Pancreas (tissue), 10 donors: ENCODE measurements at regions of chr2 and their contacts with region 1.

Region 1: DNA sequence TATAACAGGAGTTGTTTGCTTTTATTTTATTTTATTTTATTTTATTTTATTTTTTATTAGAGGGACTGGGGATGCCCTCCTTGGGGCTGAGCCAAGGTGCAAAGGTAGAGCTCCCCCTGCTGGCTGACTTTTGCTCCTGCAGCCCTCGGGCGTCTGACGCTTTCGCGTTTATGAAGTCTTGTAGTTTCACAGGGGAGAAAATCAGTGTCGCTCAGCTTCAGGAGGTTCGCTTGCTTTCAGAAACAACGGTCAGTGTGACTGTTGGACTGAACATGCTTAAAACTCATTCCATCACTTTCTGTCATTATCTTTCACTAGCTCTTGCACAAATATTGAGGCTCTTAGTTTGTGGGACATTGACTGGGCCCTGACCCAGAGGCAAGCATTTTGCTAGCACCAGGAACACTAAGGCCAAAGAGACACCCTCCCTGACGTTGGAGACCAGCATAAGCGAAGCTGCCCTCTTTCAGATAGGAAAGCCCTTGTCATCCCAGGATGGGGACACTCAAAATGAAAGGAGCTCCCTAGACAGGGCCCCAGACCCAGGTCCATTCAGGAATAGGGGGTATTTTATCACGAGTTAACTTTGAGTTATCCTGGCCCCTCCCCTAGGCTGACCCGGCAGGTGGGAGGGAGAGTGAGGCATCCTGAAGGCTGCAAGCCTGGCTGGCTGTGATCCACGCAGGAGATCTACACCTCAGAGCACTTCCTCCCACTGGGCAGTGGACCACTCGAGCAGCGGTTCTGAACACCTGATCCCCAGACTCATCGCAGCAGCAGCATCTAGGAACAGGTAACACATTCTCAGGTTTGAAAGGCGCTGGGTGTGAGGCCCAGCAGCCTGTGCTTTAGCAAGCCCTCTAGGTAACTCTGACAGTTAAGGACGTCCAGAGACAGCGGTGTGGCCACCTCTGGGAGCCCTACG is 34.4 kb downstream of the LGALSL start:
- DNase-seq: peak; percentile 25 to 90 (median 68)
- ATAC-seq: peak; percentile 75 to 93 (median 88)
- H3K4me3 ChIP-seq: no peak overlapping the region
- H3K27ac ChIP-seq: no peak overlapping the region
- H3K4me1 ChIP-seq: no peaks in the 10 kb centered on the region
- H3K27me3 ChIP-seq: no peaks in the 10 kb centered on the region
- CTCF ChIP-seq: peak; percentile 86 to 98 (median 97)

Region 2: GRCh38 chr2:64040161-64040560 is 448.2 kb before region 1 on chr2:
- intact Hi-C with region 1: loop called in 1 of 3 experiments (anchors 5 kb)
- DNase-seq: no peak
- ATAC-seq: no peak
- H3K4me3 ChIP-seq: no peak overlapping the region
- H3K27ac ChIP-seq: no peak overlapping the region
- H3K4me1 ChIP-seq: no peaks in the 10 kb centered on the region
- H3K27me3 ChIP-seq: no peaks in the 10 kb centered on the region
- CTCF ChIP-seq: no peak